OCI-LY7 (cell line): ENCODE measurements at regions of chr13 and their contacts with region 1.

Region 1: DNA sequence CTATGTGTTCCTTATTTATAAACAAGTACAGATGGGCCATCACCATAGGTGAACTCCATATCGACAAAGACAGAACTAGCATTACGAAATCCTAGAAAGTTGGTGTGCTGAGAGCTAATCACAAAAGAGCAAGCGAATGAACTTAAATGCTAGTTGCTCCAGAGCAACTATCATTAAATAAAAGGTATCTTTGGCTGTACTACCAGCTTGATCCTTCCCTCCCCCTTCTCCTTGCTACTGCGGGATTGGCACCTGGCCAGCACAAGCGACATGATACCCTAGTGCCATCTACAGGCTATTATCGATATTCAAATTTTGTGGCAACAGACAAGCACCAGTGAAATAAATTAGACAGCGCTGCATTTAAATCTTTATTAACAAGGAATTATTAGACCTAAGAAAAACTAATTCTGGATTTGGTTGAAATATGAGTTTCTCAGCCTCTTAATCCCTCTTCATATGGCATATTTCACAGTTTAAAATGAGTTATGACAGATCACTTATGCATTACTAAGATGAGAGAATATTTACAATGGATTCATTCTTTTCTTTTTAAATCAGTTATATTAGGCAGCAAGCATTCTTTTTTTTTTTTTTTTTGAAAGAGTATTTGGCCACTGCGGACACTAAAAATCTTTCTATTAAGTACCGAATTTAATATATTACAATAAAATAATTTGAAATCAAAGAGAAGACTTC is 5.8 kb downstream of the PCDH9 start:
- DNase-seq: peak; percentile 86
- H3K4me3 ChIP-seq: peak overlapping the region; percentile 62
- H3K27ac ChIP-seq: peak overlapping the region; percentile 48
- H3K4me1 ChIP-seq: peaks cover 56% of the 10 kb centered on the region
- CTCF ChIP-seq: peak; percentile 87

Region 2: DNA sequence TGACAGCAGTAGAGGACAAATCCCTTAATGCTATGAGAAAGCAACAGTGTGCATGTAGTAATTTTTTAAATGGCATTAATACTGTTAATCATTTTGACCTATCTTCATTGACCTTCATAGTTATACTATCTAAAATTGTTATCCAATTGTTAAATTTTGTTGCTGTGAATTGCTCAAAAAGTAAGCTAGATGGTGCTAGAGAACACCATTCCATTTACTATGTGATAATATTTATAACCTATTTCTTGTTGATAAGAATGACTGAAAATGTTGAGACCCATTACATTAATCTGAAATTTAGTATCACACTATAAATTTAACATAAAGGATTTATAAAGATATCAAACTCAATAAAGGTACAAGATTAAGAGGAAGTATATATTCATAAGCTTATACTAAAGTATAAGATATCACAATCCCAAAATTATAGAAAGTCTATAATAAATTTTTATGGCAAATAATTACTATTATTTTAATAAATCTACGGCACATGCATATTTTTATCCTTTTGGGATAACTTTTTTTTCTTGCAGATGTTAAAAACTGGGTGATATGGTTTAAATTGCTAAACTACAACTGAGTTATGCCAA is 1567.5 kb before region 1 on chr13:
- CTCF ChIA-PET with region 1: interaction called, 3 read pairs
- POLR2A ChIA-PET with region 1: no interaction called
- intact Hi-C with region 1: loop called (anchors 5 kb)
- DNase-seq: peak; percentile 6
- H3K4me3 ChIP-seq: no peak overlapping the region
- H3K27ac ChIP-seq: no peak overlapping the region
- H3K4me1 ChIP-seq: no peaks in the 10 kb centered on the region
- CTCF ChIP-seq: peak; percentile 79

Region 3: DNA sequence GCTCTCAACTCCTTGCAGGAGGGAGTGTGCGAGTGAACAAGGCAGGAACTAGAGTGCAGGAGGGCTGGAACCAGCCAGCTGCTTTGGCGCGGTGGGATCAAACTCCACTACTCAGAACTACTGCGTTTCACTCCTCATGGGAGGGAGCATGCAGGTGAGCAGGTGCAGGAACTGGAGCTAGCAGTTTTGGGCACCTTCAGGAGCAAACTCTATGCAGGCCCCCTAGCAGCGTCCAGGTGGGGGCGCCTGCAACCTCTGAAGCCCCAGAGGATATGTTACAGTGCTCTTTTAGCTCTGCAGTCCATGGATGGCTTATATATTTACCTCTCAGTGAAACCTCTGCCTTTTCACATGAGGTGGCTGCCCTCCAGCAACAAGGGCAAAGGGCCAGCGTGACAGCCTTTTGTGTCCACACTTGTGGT is 1297.5 kb before region 1 on chr13:
- CTCF ChIA-PET with region 1: no interaction called
- POLR2A ChIA-PET with region 1: no interaction called
- intact Hi-C with region 1: loop called (anchors 10 kb)
- DNase-seq: peak; percentile 31
- H3K4me3 ChIP-seq: no peak overlapping the region
- H3K27ac ChIP-seq: no peak overlapping the region
- H3K4me1 ChIP-seq: no peaks in the 10 kb centered on the region
- CTCF ChIP-seq: peak; percentile 56

Region 4: GRCh38 chr13:66618702-66619101 is 605.6 kb before region 1 on chr13:
- CTCF ChIA-PET with region 1: no interaction called
- POLR2A ChIA-PET with region 1: no interaction called
- intact Hi-C with region 1: loop called (anchors 5 kb)
- DNase-seq: peak; percentile 34
- H3K4me3 ChIP-seq: no peak overlapping the region
- H3K27ac ChIP-seq: no peak overlapping the region
- H3K4me1 ChIP-seq: no peaks in the 10 kb centered on the region
- CTCF ChIP-seq: peak; percentile 71

Region 5: GRCh38 chr13:66794340-66795031 is 429.8 kb before region 1 on chr13:
- CTCF ChIA-PET with region 1: no interaction called
- POLR2A ChIA-PET with region 1: interaction called, 5 read pairs
- intact Hi-C with region 1: loop called (anchors 2 kb)
- DNase-seq: peak; percentile 92
- H3K4me3 ChIP-seq: peak overlapping the region; percentile 39
- H3K27ac ChIP-seq: peak overlapping the region; percentile 94
- H3K4me1 ChIP-seq: peaks cover 35% of the 10 kb centered on the region
- CTCF ChIP-seq: no peak

Region 6: GRCh38 chr13:66994097-66994496 is 230.2 kb before region 1 on chr13:
- CTCF ChIA-PET with region 1: interaction called, 5 read pairs
- POLR2A ChIA-PET with region 1: interaction called, 18 read pairs
- intact Hi-C with region 1: loop called (anchors 1 kb)
- DNase-seq: peak; percentile 90
- H3K4me3 ChIP-seq: peak overlapping the region; percentile 49
- H3K27ac ChIP-seq: peak overlapping the region; percentile 99
- H3K4me1 ChIP-seq: peaks cover 70% of the 10 kb centered on the region
- CTCF ChIP-seq: peak; percentile 81

Region 7: GRCh38 chr13:67075239-67075638 is 149.1 kb before region 1 on chr13:
- CTCF ChIA-PET with region 1: no interaction called
- POLR2A ChIA-PET with region 1: interaction called, 5 read pairs
- intact Hi-C with region 1: loop called (anchors 5 kb)
- DNase-seq: no peak
- H3K4me3 ChIP-seq: no peak overlapping the region
- H3K27ac ChIP-seq: no peak overlapping the region
- H3K4me1 ChIP-seq: no peaks in the 10 kb centered on the region
- CTCF ChIP-seq: peak; percentile 50